Activated CD4-positive, alpha-beta T cell treated with anti-CD3 and anti-CD28 coated beads, Interleukin-2, amount 10 ng/mL, durations not matched to agents 24 days and 14 days (primary cell): ENCODE measurements at regions of chr3 and their contacts with region 1.

Region 1: DNA sequence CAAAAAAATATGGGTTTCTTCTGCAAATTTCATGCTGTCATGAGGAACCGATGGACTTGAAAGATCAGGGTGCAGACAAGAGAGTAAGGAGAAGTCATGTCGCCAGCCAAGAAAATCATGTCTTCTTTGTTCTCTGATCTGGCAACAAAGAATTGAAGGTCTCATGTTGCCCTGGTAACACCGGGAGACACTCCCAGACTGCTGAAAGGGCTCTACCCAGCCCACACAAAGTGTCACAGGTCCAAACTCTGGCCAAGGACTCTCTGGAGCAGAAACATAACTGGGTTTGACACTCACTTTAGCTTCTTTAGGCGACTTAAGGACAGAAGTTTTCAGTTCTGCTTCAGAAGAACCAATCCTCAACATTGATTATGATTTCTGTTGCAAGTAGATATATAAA is 42.9 kb downstream of the SIDT1 start:
- DNase-seq: no peak
- H3K4me3 Mint-ChIP-seq: no peak overlapping the region
- H3K27ac Mint-ChIP-seq: no peak overlapping the region
- H3K4me1 Mint-ChIP-seq: peaks cover 5% of the 10 kb centered on the region
- H3K27me3 Mint-ChIP-seq: no peaks in the 10 kb centered on the region

Region 2: GRCh38 chr3:113051302-113051711 is 523.9 kb before region 1 on chr3:
- intact Hi-C with region 1: loop called (anchors 1 kb)
- DNase-seq: peak; percentile 96
- H3K4me3 Mint-ChIP-seq: no peak overlapping the region
- H3K27ac Mint-ChIP-seq: no peak overlapping the region
- H3K4me1 Mint-ChIP-seq: peaks cover 2% of the 10 kb centered on the region
- H3K27me3 Mint-ChIP-seq: peaks cover 2% of the 10 kb centered on the region

Region 3: DNA sequence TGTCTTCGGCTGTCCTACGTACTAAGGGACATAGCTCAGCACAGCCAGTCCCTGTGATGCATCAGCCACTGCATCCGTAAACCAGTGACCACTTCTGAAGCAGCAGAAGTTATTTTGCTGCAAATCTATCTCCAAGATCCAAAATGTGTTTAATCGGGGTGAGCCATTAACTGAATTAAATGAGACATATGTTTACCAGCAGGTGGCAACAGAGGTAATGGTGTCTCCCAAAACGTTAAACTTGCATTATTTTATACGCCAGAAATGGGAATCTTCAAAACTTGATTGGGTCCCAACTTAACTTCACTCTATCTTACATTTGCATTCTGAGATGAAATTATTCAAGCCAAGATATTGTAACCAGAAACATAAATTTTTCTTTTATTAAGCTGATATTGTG is 439.1 kb before region 1 on chr3:
- intact Hi-C with region 1: loop called (anchors 5 kb)
- DNase-seq: no peak
- H3K4me3 Mint-ChIP-seq: no peak overlapping the region
- H3K27ac Mint-ChIP-seq: no peak overlapping the region
- H3K4me1 Mint-ChIP-seq: peaks cover 3% of the 10 kb centered on the region
- H3K27me3 Mint-ChIP-seq: peaks cover 2% of the 10 kb centered on the region

Region 4: DNA sequence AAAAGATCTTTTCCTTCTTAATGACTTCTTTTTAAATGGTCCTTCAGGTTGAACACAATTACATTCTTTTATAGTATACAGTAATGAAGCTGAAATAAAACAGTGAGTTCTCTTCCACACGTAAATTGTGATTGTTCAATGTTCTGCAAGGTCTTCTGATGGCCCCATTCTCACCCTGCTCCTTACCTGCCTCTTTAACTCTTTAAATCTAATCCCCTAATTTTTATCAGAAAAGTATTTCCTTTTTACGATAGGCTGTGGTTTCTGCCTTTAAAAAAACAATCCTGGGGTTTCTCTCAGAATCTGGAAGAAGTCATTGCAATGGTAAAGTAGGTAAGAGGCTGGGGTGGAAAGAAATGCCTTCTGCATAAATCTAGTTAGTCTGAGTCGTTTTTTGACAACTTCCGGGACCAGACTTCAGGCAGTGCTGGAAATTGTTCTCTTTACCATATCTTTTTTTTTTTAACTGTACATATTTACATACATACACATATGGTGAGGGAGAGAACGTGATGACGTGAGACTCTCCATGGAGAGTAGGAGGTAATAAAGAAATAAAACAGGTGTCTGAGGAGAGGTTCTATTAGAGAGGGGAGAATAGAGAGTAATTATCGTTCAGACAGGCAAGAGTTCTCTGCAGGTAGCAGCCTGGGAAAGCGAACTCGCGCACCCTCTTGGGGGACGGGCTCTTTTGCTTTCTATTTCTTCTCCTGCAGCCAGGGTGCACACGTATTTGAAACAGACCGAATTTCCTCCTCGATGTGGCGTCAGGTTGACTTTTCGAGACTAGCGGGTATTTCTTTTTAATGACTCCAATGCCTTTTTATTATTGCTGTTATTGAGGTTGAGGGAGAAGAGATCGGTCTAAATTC is 43.1 kb before region 1 on chr3 and contains the start of gene SIDT1:
- intact Hi-C with region 1: loop called (anchors 1 kb)
- DNase-seq: peak; percentile 92
- H3K4me3 Mint-ChIP-seq: peak within 1 kb of the TSS; percentile 91
- H3K27ac Mint-ChIP-seq: peak within 1 kb of the TSS; percentile 96
- H3K4me1 Mint-ChIP-seq: peaks cover 36% of the 10 kb centered on the region
- H3K27me3 Mint-ChIP-seq: peaks cover 11% of the 10 kb centered on the region
- total RNA-seq, gene SIDT1: 8.5 and 11.5 TPM in 2 replicates